Right lobe of liver (tissue), 6 donors: ENCODE measurements at regions of chr14 and their contacts with region 1.

Region 1: GRCh38 chr14:59882957-59883356 is 12.4 kb upstream of the RTN1 start:
- DNase-seq: no peak
- ATAC-seq: no peak
- H3K4me3 ChIP-seq: no peak overlapping the region
- H3K27ac ChIP-seq: no peak overlapping the region
- H3K4me1 ChIP-seq: no peaks in the 10 kb centered on the region
- H3K27me3 ChIP-seq: no peaks in the 10 kb centered on the region
- CTCF ChIP-seq: peak in 2 of 4 donors; percentile 16 to 26
- POLR2A ChIP-seq: no peak

Region 2: DNA sequence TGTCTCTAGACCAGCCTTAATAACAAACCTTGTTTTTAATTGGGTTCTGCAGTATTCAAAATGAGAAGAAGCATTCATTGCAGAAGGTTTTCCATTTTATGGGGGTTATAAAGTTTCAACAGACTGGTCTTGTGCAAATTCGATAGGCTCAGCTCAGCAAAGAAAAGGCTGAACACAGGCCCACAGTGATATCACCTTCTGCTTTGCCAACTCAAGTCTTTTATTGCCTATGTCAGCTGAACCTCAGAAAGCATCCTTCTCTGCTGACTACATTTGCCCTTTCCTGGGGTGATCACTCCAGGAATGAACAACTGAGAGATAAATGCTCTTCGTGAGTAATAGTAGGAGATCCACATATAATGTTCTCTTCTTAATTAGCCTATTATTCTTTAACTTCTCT is 171.9 kb before region 1 on chr14:
- intact Hi-C with region 1: loop called in 1 of 2 experiments (anchors 10 kb)
- DNase-seq: no peak
- ATAC-seq: no peak
- H3K4me3 ChIP-seq: no peak overlapping the region
- H3K27ac ChIP-seq: no peak overlapping the region
- H3K4me1 ChIP-seq: peaks cover 0 to 6% (median 0%) of the 10 kb centered on the region in 4 donors
- H3K27me3 ChIP-seq: no peaks in the 10 kb centered on the region
- CTCF ChIP-seq: no peak
- POLR2A ChIP-seq: no peak